CD8-positive, alpha-beta T cell (primary cell): ENCODE measurements at regions of chr2 and their contacts with region 1.

Region 1: GRCh38 chr2:200509612-200510433 is at the start of gene KCTD18:
- DNase-seq: peak; percentile 83 to 96 (median 93)
- ATAC-seq: peak; percentile 99
- H3K4me3 ChIP-seq: peak within 1 kb of the TSS; percentile 78 to 79
- H3K4me3 Mint-ChIP-seq: peak within 1 kb of the TSS; percentile 91
- H3K27ac ChIP-seq: peak within 1 kb of the TSS; percentile 61 to 71
- H3K27ac Mint-ChIP-seq: peak within 1 kb of the TSS; percentile 93
- H3K4me1 ChIP-seq: peaks cover 25% of the 10 kb centered on the region
- H3K4me1 Mint-ChIP-seq: peaks cover 42% of the 10 kb centered on the region
- H3K27me3 ChIP-seq: peaks cover 0 to 7% of the 10 kb centered on the region in 2 experiments
- H3K27me3 Mint-ChIP-seq: no peaks in the 10 kb centered on the region
- CTCF ChIP-seq: peak; percentile 75
- total RNA-seq, gene KCTD18: 17.9 to 20.4 TPM

Region 2: DNA sequence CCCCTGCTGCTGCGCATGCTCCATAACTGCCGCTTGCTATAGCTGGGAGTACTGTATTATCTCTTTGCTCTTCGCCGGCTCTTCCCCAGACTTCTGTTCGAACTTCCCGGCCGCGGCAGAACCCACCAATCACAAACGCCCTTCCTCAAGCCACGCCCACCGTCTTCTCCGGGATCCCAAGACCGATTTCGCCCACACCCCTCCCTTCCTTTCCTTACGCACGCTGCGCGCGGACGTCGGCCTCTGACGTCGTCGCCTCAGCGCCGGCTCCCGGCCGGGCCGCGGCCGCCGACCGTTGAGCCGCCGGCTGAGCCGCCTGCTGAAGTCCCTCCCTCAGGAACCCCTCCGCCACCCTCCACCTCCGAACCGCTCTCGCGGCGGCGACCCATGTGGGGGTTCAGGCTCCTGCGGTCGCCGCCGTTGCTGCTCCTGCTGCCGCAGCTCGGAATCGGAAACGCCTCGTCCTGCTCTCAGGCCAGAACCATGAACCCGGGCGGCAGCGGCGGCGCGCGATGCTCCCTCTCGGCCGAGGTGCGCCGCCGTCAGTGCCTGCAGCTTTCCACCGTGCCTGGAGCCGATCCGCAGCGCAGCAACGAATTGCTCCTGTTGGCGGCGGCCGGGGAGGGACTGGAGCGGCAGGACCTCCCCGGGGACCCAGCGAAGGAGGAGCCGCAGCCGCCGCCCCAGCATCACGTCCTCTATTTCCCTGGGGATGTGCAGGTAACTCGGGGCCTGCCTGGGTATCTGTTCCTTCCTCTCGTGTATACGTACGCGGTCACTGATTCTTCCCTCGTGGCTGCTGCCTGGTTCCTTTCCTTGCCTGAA is 598.6 kb before region 1 on chr2 and contains the start of gene C2orf69:
- CTCF ChIA-PET with region 1: no interaction called
- POLR2A ChIA-PET with region 1: no interaction called
- intact Hi-C with region 1: loop called in 1 of 2 experiments (anchors 5 kb)
- DNase-seq: peak; percentile 80 to 96 (median 91)
- ATAC-seq: peak; percentile 78
- H3K4me3 ChIP-seq: peak within 1 kb of the TSS; percentile 82 to 83
- H3K4me3 Mint-ChIP-seq: peak within 1 kb of the TSS; percentile 99
- H3K27ac ChIP-seq: peak within 1 kb of the TSS; percentile 84 to 93
- H3K27ac Mint-ChIP-seq: peak within 1 kb of the TSS; percentile 95
- H3K4me1 ChIP-seq: peaks cover 28% of the 10 kb centered on the region
- H3K4me1 Mint-ChIP-seq: peaks cover 38% of the 10 kb centered on the region
- H3K27me3 ChIP-seq: no peaks in the 10 kb centered on the region
- H3K27me3 Mint-ChIP-seq: peaks cover 6% of the 10 kb centered on the region
- CTCF ChIP-seq: no peak
- total RNA-seq, gene C2orf69: 16.3 to 17.5 TPM

Region 3: DNA sequence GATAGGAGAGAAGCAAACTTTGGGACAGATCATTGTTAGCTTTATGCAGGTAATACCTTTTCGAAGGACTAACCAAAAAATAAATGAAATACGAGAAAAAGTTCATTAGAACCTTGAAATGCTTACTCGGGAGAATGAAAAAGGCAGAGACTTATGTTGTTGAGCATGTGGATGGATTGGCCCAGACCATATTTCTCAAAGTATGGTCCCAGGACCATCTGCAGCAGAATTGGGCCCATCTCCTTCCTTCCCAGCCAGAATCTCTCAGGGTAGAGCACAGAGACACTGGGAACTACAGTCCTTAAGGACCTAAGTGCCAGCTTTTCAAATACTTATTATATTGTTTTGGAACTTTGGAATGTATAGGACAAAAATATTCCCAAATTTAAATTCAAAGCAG is 50.7 kb before region 1 on chr2:
- CTCF ChIA-PET with region 1: no interaction called
- POLR2A ChIA-PET with region 1: no interaction called
- intact Hi-C with region 1: no loop called
- DNase-seq: no peak
- ATAC-seq: no peak
- H3K4me3 ChIP-seq: no peak overlapping the region
- H3K4me3 Mint-ChIP-seq: no peak overlapping the region
- H3K27ac ChIP-seq: no peak overlapping the region
- H3K27ac Mint-ChIP-seq: no peak overlapping the region
- H3K4me1 ChIP-seq: peaks cover 7% of the 10 kb centered on the region
- H3K4me1 Mint-ChIP-seq: peaks cover 19% of the 10 kb centered on the region
- H3K27me3 ChIP-seq: no peaks in the 10 kb centered on the region
- H3K27me3 Mint-ChIP-seq: no peaks in the 10 kb centered on the region
- CTCF ChIP-seq: no peak

Region 4: GRCh38 chr2:200471928-200472645 is 37.7 kb before region 1 on chr2:
- CTCF ChIA-PET with region 1: no interaction called
- POLR2A ChIA-PET with region 1: no interaction called
- intact Hi-C with region 1: no loop called
- DNase-seq: no peak
- ATAC-seq: no peak
- H3K4me3 ChIP-seq: no peak overlapping the region
- H3K4me3 Mint-ChIP-seq: no peak overlapping the region
- H3K27ac ChIP-seq: no peak overlapping the region
- H3K27ac Mint-ChIP-seq: no peak overlapping the region
- H3K4me1 ChIP-seq: peaks cover 20% of the 10 kb centered on the region
- H3K4me1 Mint-ChIP-seq: peaks cover 25% of the 10 kb centered on the region
- H3K27me3 ChIP-seq: no peaks in the 10 kb centered on the region
- H3K27me3 Mint-ChIP-seq: no peaks in the 10 kb centered on the region
- CTCF ChIP-seq: no peak

Region 5: GRCh38 chr2:200525882-200526651 is 16.2 kb after region 1 on chr2 and contains the start of gene SGO2:
- CTCF ChIA-PET with region 1: interaction called, 15 read pairs
- POLR2A ChIA-PET with region 1: interaction called, 10 read pairs
- intact Hi-C with region 1: loop called (anchors 1 kb)
- DNase-seq: peak; percentile 92 to 97 (median 95)
- ATAC-seq: peak; percentile 100
- H3K4me3 ChIP-seq: peak within 1 kb of the TSS; percentile 73 to 84
- H3K4me3 Mint-ChIP-seq: peak within 1 kb of the TSS; percentile 91
- H3K27ac ChIP-seq: peak within 1 kb of the TSS; percentile 18 to 71
- H3K27ac Mint-ChIP-seq: peak within 1 kb of the TSS; percentile 87
- H3K4me1 ChIP-seq: peaks cover 7% of the 10 kb centered on the region
- H3K4me1 Mint-ChIP-seq: peaks cover 10% of the 10 kb centered on the region
- H3K27me3 ChIP-seq: no peaks in the 10 kb centered on the region
- H3K27me3 Mint-ChIP-seq: no peaks in the 10 kb centered on the region
- CTCF ChIP-seq: no peak
- total RNA-seq, gene SGO2: 0.52 to 0.69 TPM

Region 6: DNA sequence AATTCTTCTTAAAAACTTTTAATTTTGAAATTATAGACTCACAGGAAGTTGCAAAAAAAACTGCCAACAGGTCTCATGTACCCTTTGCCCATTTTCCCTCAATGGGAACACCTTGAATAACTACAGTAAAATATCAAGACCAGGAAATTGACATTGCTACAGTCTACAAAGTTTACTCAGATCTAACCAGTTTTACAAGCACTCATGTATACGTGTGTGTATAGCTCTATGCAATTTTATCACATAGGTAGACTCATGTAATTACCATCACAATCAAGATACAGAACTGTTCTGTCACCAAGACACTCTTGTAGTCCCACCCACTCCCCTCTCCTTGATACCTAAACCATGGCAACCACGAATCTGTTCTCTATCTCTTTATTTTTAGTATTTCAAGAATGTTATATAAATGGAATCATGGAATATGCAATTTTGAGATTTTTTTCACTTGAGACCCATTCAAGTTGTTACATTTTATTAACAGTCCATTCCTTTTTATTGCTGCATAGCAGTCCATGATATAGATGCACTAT is 555.0 kb after region 1 on chr2:
- CTCF ChIA-PET with region 1: no interaction called
- POLR2A ChIA-PET with region 1: no interaction called
- intact Hi-C with region 1: loop called in 1 of 2 experiments (anchors 5 kb)
- DNase-seq: no peak
- ATAC-seq: no peak
- H3K4me3 ChIP-seq: no peak overlapping the region
- H3K4me3 Mint-ChIP-seq: no peak overlapping the region
- H3K27ac ChIP-seq: no peak overlapping the region
- H3K27ac Mint-ChIP-seq: peak overlapping the region; percentile 32
- H3K4me1 ChIP-seq: peaks cover 22% of the 10 kb centered on the region
- H3K4me1 Mint-ChIP-seq: peaks cover 61% of the 10 kb centered on the region
- H3K27me3 ChIP-seq: no peaks in the 10 kb centered on the region
- H3K27me3 Mint-ChIP-seq: no peaks in the 10 kb centered on the region
- CTCF ChIP-seq: no peak

Region 7: DNA sequence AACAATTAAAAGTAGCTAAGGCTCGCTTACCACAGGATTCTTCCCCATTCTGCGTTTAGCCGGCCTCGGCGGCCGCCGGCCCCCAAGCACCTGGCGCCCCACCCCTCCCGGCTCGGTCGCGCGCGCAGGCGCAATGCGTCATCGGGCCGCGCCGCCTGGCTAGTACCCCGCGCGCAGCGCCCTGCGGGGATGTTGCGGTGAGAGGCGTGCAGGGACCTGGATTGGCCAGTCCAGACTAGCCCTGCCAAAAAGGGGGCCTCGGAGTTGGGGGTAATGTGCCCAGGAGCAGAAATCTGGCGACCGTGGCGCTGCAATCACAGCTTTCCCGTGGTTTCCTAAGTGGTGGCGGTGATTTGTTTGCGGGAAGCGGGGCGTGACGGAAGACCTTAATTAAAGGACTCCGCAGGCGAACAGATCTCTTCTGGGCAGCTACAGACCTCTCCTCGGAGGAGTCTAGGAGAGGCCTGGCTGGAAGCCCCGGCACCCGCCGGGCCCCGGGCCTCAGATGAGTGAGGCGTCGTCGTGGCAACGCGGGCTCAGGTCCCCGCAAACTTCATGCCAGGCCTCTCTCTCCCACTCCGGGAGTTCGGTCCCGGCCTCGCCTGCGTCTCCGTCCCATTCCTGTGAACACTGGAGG is 1132.9 kb after region 1 on chr2:
- CTCF ChIA-PET with region 1: no interaction called
- POLR2A ChIA-PET with region 1: no interaction called
- intact Hi-C with region 1: loop called in 1 of 2 experiments (anchors 10 kb)
- DNase-seq: peak; percentile 65 to 91 (median 83)
- ATAC-seq: peak; percentile 86
- H3K4me3 ChIP-seq: peak overlapping the region; percentile 98 to 99
- H3K4me3 Mint-ChIP-seq: peak overlapping the region; percentile 90
- H3K27ac ChIP-seq: peak overlapping the region; percentile 89 to 99
- H3K27ac Mint-ChIP-seq: peak overlapping the region; percentile 96
- H3K4me1 ChIP-seq: no peaks in the 10 kb centered on the region
- H3K4me1 Mint-ChIP-seq: peaks cover 14% of the 10 kb centered on the region
- H3K27me3 ChIP-seq: no peaks in the 10 kb centered on the region
- H3K27me3 Mint-ChIP-seq: no peaks in the 10 kb centered on the region
- CTCF ChIP-seq: no peak